Caco-2 (cell line): ENCODE measurements at regions of chr11 and their contacts with region 1.

Region 1: GRCh38 chr11:66311965-66312548 is 4.8 kb downstream of the CD248 start:
- DNase-seq: peak; percentile 97
- H3K4me3 ChIP-seq: peak overlapping the region; percentile 52
- H3K4me3 Mint-ChIP-seq: peak overlapping the region; percentile 87
- H3K27ac Mint-ChIP-seq: peak overlapping the region; percentile 91
- H3K4me1 ChIP-seq: peaks cover 14% of the 10 kb centered on the region
- H3K4me1 Mint-ChIP-seq: no peaks in the 10 kb centered on the region
- H3K27me3 ChIP-seq: no peaks in the 10 kb centered on the region
- H3K27me3 Mint-ChIP-seq: no peaks in the 10 kb centered on the region
- CTCF ChIP-seq: peak in 1 of 2 experiments; percentile 88

Region 2: GRCh38 chr11:66081505-66081904 is 230.6 kb before region 1 on chr11:
- CTCF ChIA-PET with region 1: no interaction called
- POLR2A ChIA-PET with region 1: no interaction called
- intact Hi-C with region 1: no loop called
- DNase-seq: no peak
- H3K4me3 ChIP-seq: no peak overlapping the region
- H3K4me3 Mint-ChIP-seq: no peak overlapping the region
- H3K27ac Mint-ChIP-seq: no peak overlapping the region
- H3K4me1 ChIP-seq: peaks cover 57% of the 10 kb centered on the region
- H3K4me1 Mint-ChIP-seq: peaks cover 34% of the 10 kb centered on the region
- H3K27me3 ChIP-seq: no peaks in the 10 kb centered on the region
- H3K27me3 Mint-ChIP-seq: no peaks in the 10 kb centered on the region
- CTCF ChIP-seq: no peak

Region 3: GRCh38 chr11:66112601-66113098 is 199.4 kb before region 1 on chr11:
- CTCF ChIA-PET with region 1: no interaction called
- POLR2A ChIA-PET with region 1: no interaction called
- intact Hi-C with region 1: no loop called
- DNase-seq: no peak
- H3K4me3 ChIP-seq: no peak overlapping the region
- H3K4me3 Mint-ChIP-seq: peak overlapping the region; percentile 39
- H3K27ac Mint-ChIP-seq: peak overlapping the region; percentile 89
- H3K4me1 ChIP-seq: peaks cover 71% of the 10 kb centered on the region
- H3K4me1 Mint-ChIP-seq: peaks cover 51% of the 10 kb centered on the region
- H3K27me3 ChIP-seq: no peaks in the 10 kb centered on the region
- H3K27me3 Mint-ChIP-seq: no peaks in the 10 kb centered on the region
- CTCF ChIP-seq: no peak

Region 4: DNA sequence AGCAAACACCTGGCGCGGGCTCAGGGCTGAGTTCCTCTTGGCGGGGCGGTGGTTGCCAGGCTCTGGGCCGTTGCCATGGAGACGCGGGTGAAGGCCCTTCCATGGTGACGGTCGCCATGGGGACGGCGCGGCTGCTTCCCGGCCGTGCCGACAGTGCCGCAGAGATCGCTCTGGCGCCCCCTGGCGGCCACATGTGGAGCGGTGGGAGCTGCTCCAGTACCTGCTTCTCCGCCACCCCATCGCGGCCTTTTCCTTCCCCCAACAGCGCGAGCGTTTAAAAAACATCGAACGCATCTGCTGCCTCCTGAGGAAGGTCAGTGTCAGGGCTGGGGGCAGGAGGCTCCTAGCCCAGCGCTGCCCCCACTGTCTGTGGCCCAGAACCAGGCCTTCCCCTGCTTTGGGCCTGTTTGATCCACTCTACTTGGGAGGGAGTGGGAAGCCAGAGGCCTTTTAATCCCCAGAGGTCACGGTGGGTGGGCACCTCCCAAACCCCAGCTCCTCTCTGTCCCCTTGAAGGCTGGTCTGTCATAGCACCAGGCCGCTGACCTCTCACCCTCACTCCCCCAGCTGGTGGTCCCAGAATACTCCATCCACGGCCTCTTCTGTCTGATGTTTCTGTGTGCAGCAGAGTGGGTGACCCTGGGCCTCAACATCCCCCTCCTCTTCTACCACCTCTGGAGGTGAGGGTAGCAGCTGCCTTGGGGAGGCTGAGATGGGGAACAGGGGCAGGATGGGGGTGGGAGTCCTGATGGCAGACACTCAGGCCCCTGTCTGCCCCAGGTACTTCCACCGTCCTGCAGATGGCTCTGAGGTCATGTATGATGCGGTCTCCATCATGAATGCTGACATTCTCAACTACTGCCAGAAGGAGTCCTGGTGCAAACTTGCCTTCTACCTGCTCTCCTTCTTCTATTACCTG is 29.3 kb before region 1 on chr11:
- CTCF ChIA-PET with region 1: interaction called, 13 read pairs
- POLR2A ChIA-PET with region 1: no interaction called
- intact Hi-C with region 1: no loop called
- DNase-seq: peak; percentile 93
- H3K4me3 ChIP-seq: no peak overlapping the region
- H3K4me3 Mint-ChIP-seq: no peak overlapping the region
- H3K27ac Mint-ChIP-seq: no peak overlapping the region
- H3K4me1 ChIP-seq: peaks cover 7% of the 10 kb centered on the region
- H3K4me1 Mint-ChIP-seq: peaks cover 26% of the 10 kb centered on the region
- H3K27me3 ChIP-seq: no peaks in the 10 kb centered on the region
- H3K27me3 Mint-ChIP-seq: no peaks in the 10 kb centered on the region
- CTCF ChIP-seq: peak; percentile 80 to 90

Region 5: DNA sequence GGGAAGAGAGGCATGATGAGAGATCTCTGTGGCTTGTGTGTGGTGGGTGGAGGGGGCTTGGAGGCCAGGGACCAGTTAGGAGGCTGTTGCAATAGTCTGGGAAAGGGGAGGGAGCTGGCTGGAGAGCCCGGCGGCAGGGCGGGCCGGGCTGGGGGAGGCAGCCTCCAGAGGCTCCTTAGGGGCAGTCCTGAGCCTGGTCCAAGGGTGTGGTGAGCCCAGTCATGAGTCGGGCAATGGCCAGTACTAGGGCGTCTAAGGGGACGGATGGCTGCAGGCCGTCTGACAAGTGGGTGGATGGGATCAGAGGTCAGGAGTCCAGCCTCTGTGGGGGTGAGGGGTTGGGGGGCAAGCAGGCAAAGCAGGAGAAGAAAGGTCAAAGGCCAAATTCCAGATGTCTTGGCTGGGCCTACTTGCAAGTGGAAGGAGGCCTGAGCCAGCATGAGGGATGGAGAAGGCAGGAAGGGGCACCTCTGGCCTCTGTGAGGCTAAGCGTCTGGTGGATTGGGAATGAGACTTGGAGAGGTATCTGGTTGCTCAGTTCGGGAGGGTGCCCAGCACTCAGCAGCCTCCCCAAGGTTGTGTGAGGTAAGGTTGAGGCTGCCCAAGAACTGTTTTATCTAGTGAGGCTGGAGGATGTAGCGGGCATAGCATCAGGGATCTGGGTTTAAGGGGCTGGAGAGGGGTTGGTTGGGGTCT is 10.8 kb after region 1 on chr11:
- CTCF ChIA-PET with region 1: interaction called, 34 read pairs
- POLR2A ChIA-PET with region 1: no interaction called
- intact Hi-C with region 1: loop called (anchors 1 kb)
- DNase-seq: peak in 1 of 2 experiments; percentile 50
- H3K4me3 ChIP-seq: no peak overlapping the region
- H3K4me3 Mint-ChIP-seq: no peak overlapping the region
- H3K27ac Mint-ChIP-seq: peak overlapping the region; percentile 29
- H3K4me1 ChIP-seq: peaks cover 50% of the 10 kb centered on the region
- H3K4me1 Mint-ChIP-seq: peaks cover 34% of the 10 kb centered on the region
- H3K27me3 ChIP-seq: no peaks in the 10 kb centered on the region
- H3K27me3 Mint-ChIP-seq: no peaks in the 10 kb centered on the region
- CTCF ChIP-seq: no peak

Region 6: GRCh38 chr11:66336234-66337102 is 24.4 kb after region 1 on chr11 and contains the start of gene RIN1:
- CTCF ChIA-PET with region 1: interaction called, 90 read pairs
- POLR2A ChIA-PET with region 1: interaction called, 26 read pairs
- intact Hi-C with region 1: loop called (anchors 1 kb)
- DNase-seq: peak; percentile 87
- H3K4me3 ChIP-seq: peak within 1 kb of the TSS; percentile 69
- H3K4me3 Mint-ChIP-seq: peak within 1 kb of the TSS; percentile 94
- H3K27ac Mint-ChIP-seq: peak within 1 kb of the TSS; percentile 91
- H3K4me1 ChIP-seq: peaks cover 10% of the 10 kb centered on the region
- H3K4me1 Mint-ChIP-seq: peaks cover 7% of the 10 kb centered on the region
- H3K27me3 ChIP-seq: no peaks in the 10 kb centered on the region
- H3K27me3 Mint-ChIP-seq: no peaks in the 10 kb centered on the region
- CTCF ChIP-seq: peak; percentile 52 to 71
- total RNA-seq, gene RIN1: 11.7 and 12.7 TPM in 2 replicates

Region 7: DNA sequence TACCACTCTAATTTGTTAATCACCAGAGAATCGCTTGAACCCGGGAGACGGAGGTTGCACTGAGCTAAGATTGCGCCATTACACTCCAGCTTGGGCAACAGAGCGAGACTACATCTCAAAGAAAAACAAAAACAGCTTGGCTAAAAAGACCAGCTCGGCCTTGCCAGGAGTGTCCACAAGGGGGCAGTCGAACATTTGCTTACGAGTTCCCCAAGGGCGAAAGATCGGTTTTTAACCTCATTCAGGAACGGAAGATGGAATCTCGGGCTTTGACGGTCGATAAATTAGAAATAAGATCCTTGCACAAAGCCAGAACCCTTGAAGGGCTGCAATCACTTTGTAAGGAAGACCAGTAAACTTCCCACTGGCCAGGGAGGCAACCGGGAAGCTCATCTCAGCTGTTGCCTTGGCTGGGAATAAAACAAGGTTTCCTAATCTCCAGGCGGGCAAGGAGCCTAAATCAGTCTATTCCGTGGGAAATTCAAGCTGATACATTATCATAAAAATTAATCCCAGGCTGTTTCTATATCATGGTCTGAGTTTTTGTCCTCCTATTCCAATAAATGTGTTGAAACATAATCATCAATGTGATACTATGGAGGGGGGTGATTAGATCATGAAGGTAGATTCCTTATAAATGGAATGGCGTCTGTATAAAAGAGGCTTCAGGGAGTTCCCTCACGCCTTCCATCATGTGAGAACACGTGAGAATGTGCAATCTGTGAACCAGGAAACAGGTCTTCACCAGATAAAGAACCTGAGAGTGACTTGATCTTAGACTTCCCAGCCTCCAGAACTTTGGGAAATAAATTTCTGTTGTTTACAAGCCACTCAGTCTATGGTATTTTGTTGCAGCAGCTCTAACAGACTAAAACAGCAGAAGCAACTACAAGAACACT is 74.4 kb after region 1 on chr11:
- CTCF ChIA-PET with region 1: interaction called, 35 read pairs
- POLR2A ChIA-PET with region 1: no interaction called
- intact Hi-C with region 1: loop called (anchors 1 kb)
- DNase-seq: peak; percentile 85 to 86
- H3K4me3 ChIP-seq: no peak overlapping the region
- H3K4me3 Mint-ChIP-seq: peak overlapping the region; percentile 61
- H3K27ac Mint-ChIP-seq: no peak overlapping the region
- H3K4me1 ChIP-seq: no peaks in the 10 kb centered on the region
- H3K4me1 Mint-ChIP-seq: no peaks in the 10 kb centered on the region
- H3K27me3 ChIP-seq: no peaks in the 10 kb centered on the region
- H3K27me3 Mint-ChIP-seq: peaks cover 5% of the 10 kb centered on the region
- CTCF ChIP-seq: peak; percentile 86 to 94